ENCODE measurements at regions of chr16 and their contacts with region 1.

Region 1: DNA sequence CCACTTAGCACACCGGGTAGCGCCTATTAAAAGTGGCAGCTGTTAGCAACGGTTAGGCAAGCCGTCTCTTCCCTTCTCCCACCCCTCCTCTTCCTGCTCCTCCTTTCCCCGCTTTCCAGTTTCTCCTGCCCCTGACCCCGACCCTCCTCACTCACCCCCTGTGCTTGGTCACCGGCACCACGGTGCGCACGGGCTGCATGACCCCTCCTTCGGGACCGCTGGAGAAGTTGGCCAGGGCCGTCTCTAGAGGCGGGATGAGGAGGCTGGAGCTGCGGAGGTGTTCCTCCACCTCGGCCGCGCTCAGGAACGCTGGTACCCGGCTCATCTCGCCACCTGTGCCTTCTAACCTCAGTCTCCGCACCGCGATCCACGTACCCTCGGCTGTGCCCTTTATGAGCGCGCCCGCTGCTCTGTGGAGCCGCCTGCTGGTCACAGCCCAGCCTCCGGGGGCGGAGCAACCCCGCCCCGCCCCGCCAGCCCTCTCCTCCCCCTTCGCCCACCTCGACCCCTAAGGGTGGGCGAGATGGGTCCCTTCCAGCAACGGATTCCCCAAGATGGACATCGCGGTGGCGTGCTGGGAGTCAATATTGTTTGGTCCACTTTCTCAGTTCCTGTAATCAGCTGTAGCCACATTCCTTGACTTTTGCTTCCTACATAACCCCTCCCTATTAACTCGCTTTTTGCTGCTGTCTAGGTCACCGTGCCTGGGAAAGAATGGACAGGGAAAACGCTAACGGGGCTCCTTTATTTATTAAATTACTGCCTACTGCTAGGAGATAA is at the start of gene CRYM:
- DNase-seq: peak; percentile 65 to 82 (median 66)
- ATAC-seq: peak; percentile 87 to 96 (median 93)
- H3K4me3 ChIP-seq: peak within 1 kb of the TSS; percentile 24 to 93 (median 64)
- H3K27ac ChIP-seq: peak within 1 kb of the TSS; percentile 28 to 93 (median 82)
- H3K4me1 ChIP-seq: peaks cover 0 to 24% (median 5%) of the 10 kb centered on the region in 12 donors
- H3K27me3 ChIP-seq: peaks cover 0 to 54% (median 7%) of the 10 kb centered on the region in 9 donors
- CTCF ChIP-seq: peak; percentile 65 to 90 (median 78)
- POLR2A ChIP-seq: peak in 1 of 2 donors; percentile 68
- total RNA-seq, gene CRYM: 41.0 to 267 (median 116) TPM

Region 2: DNA sequence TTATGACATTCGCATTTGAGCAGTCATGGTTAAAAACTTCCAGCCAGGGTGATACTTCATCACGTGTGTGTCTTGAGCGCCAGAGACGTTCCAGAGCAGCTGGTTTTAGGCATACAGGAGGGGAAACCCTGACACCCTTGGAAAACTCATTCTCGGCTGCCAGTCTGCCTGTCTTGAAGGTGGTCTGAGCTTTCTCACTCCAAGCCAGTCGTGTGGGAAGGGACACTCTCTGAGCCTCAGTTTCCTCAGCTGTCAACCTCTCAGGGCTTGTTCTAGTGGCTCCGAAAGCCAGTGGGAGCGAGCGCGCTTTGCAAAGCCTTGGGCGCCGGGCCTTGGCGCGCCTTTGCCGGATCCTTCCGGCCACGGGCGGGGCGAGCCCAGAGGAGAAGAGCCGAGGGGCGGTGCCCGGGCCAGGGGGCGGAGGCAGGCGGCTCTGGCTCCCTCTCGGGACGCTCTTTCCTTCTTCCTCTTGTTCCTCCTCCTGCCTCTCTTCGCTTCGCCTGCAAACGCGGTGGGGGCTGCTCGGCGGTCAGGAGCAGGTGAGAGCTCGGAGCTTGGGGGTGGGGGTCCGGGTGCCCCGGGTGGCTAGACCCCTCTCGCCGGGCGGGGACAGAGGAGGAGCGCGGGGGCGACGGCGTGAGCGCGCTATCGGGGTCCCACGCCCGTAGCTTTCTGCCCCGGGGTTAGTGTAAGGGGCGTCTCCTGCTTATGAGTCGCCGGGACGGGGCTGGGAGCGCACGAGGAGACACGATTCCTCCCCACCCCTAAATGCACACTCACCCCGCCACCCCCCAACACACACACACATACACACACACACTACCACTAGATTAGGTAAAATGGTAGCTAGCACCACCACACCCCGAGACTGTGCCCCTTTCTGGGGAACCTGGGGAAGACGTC is 119.7 kb before region 1 on chr16 and contains the start of gene LDAF1:
- intact Hi-C with region 1: loop called in 1 of 10 experiments (anchors 5 kb)
- DNase-seq: peak; percentile 85 to 93 (median 88)
- ATAC-seq: peak; percentile 81 to 93 (median 90)
- H3K4me3 ChIP-seq: peak within 1 kb of the TSS; percentile 74 to 95 (median 88)
- H3K27ac ChIP-seq: peak within 1 kb of the TSS; percentile 72 to 94 (median 88)
- H3K4me1 ChIP-seq: peaks cover 17 to 59% (median 40%) of the 10 kb centered on the region in 12 donors
- H3K27me3 ChIP-seq: no peaks in the 10 kb centered on the region
- CTCF ChIP-seq: peak in 3 of 12 donors; percentile 12 to 14 (median 13)
- POLR2A ChIP-seq: peak in 1 of 2 donors; percentile 69
- total RNA-seq, gene LDAF1: 87.0 to 334 (median 162) TPM

Region 3: GRCh38 chr16:21260870-21261791 is 17.0 kb before region 1 on chr16:
- intact Hi-C with region 1: loop called in 1 of 10 experiments (anchors 1 kb)
- DNase-seq: peak in 1 of 5 donors; percentile 73
- ATAC-seq: peak in 3 of 4 donors; percentile 10 to 67 (median 35)
- H3K4me3 ChIP-seq: no peak overlapping the region
- H3K27ac ChIP-seq: peak overlapping the region in 10 of 12 donors; percentile 2 to 87 (median 56)
- H3K4me1 ChIP-seq: peaks cover 0 to 47% (median 19%) of the 10 kb centered on the region in 12 donors
- H3K27me3 ChIP-seq: no peaks in the 10 kb centered on the region
- CTCF ChIP-seq: no peak
- POLR2A ChIP-seq: no peak